Endothelial cell of umbilical vein (primary cell): ENCODE measurements at regions of chr1 and their contacts with region 1.

Region 1: GRCh38 chr1:86913896-86914634 is at the start of gene SELENOF:
- DNase-seq: peak; percentile 100
- H3K4me3 ChIP-seq: peak within 1 kb of the TSS; percentile 84 to 100 (median 99)
- H3K27ac ChIP-seq: peak within 1 kb of the TSS; percentile 100
- H3K4me1 ChIP-seq: peaks cover 16% of the 10 kb centered on the region
- H3K27me3 ChIP-seq: no peaks in the 10 kb centered on the region
- CTCF ChIP-seq: no peak
- POLR2A ChIP-seq: peak; percentile 86
- total RNA-seq, gene SELENOF: 202 and 205 TPM in 2 replicates

Region 2: GRCh38 chr1:85756864-85757263 is 1157.2 kb before region 1 on chr1:
- CTCF ChIA-PET with region 1: no interaction called
- POLR2A ChIA-PET with region 1: no interaction called
- dilution Hi-C with region 1: no loop called
- intact Hi-C with region 1: no loop called
- DNase-seq: no peak
- H3K4me3 ChIP-seq: no peak overlapping the region
- H3K27ac ChIP-seq: no peak overlapping the region
- H3K4me1 ChIP-seq: no peaks in the 10 kb centered on the region
- H3K27me3 ChIP-seq: peaks cover 0 to 3% of the 10 kb centered on the region in 2 experiments
- CTCF ChIP-seq: no peak
- POLR2A ChIP-seq: no peak

Region 3: GRCh38 chr1:86704458-86704971 is 209.6 kb before region 1 on chr1 and contains the start of gene SH3GLB1:
- CTCF ChIA-PET with region 1: interaction called, 3 read pairs
- POLR2A ChIA-PET with region 1: interaction called, 3 read pairs
- dilution Hi-C with region 1: no loop called
- intact Hi-C with region 1: loop called (anchors 10 kb)
- DNase-seq: peak; percentile 91
- H3K4me3 ChIP-seq: peak within 1 kb of the TSS; percentile 88 to 96 (median 94)
- H3K27ac ChIP-seq: peak within 1 kb of the TSS; percentile 85
- H3K4me1 ChIP-seq: peaks cover 28% of the 10 kb centered on the region
- H3K27me3 ChIP-seq: no peaks in the 10 kb centered on the region
- CTCF ChIP-seq: peak; percentile 96
- POLR2A ChIP-seq: peak; percentile 78
- total RNA-seq, gene SH3GLB1: 140 and 148 TPM in 2 replicates

Region 4: GRCh38 chr1:86833461-86834215 is 80.4 kb before region 1 on chr1:
- CTCF ChIA-PET with region 1: interaction called, 9 read pairs
- POLR2A ChIA-PET with region 1: no interaction called
- dilution Hi-C with region 1: no loop called
- intact Hi-C with region 1: loop called (anchors 1 kb)
- DNase-seq: peak; percentile 75
- H3K4me3 ChIP-seq: no peak overlapping the region
- H3K27ac ChIP-seq: no peak overlapping the region
- H3K4me1 ChIP-seq: no peaks in the 10 kb centered on the region
- H3K27me3 ChIP-seq: no peaks in the 10 kb centered on the region
- CTCF ChIP-seq: peak; percentile 51 to 52
- POLR2A ChIP-seq: no peak

Region 5: GRCh38 chr1:86965012-86965826 is 51.2 kb after region 1 on chr1:
- CTCF ChIA-PET with region 1: interaction called, 34 read pairs
- POLR2A ChIA-PET with region 1: interaction called, 3 read pairs
- dilution Hi-C with region 1: no loop called
- intact Hi-C with region 1: loop called (anchors 1 kb)
- DNase-seq: peak; percentile 56
- H3K4me3 ChIP-seq: no peak overlapping the region
- H3K27ac ChIP-seq: no peak overlapping the region
- H3K4me1 ChIP-seq: no peaks in the 10 kb centered on the region
- H3K27me3 ChIP-seq: no peaks in the 10 kb centered on the region
- CTCF ChIP-seq: peak; percentile 61 to 63
- POLR2A ChIP-seq: no peak

Region 6: DNA sequence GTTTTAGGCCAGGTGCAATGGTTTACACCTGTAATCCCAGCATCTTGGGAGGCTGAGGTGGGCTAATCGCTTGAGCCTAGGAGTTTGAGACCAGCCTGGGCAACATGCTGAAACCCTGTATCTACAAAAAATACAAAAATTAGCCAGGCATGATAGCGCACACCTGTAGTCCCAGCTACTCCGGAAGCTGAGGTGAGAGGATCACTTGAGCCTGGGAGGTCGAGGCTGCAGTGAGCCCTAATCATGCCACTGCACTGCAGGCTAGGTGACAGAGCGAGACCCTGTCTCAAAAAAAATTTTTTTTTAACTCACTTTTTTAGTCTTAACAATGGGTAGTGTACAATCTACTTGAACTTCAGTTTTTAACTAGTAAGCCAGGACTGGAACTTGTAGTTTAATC is 137.9 kb after region 1 on chr1:
- CTCF ChIA-PET with region 1: no interaction called
- POLR2A ChIA-PET with region 1: no interaction called
- dilution Hi-C with region 1: no loop called
- intact Hi-C with region 1: no loop called
- DNase-seq: no peak
- H3K4me3 ChIP-seq: no peak overlapping the region
- H3K27ac ChIP-seq: no peak overlapping the region
- H3K4me1 ChIP-seq: no peaks in the 10 kb centered on the region
- H3K27me3 ChIP-seq: no peaks in the 10 kb centered on the region
- CTCF ChIP-seq: no peak
- POLR2A ChIP-seq: no peak

Region 7: DNA sequence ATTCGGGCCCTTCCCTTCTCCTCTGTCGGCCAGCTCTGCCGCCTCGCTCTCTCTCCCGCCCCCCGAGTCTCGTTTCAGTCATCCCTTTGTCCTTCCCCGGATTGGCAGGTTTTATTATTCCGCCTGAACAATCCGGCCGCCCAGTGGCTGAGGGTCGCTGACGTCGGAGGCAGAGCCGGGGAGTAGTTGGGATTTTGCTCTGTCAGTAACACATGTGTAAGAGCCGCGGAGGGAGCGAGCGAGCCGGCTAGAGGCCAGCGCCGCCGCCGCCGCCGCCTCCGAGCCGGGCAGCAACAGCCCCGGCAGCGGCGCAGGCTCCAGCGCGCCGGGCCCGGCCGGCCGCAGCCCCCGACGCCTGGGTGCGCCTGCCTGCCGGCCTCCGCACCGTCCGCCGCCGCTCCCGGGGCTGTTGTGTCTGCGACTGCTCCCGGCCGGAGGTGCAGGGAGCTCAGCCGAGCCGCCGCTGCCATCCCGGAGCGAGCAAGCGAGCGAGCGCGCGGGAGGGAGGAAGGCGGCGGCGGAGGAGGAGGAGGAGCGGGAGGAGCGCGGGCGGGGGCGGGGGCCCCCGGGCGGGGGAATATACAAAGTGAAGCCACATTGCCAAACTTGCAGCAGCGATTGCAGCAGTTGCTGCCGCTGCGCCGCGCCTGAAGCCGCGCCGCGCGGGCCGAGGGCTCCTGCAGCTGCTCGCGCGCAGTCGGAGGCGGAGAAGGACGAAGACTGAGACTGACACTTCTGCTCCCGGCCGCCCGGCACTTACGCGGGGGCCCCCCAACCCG is 414.4 kb after region 1 on chr1 and contains the start of gene LMO4:
- CTCF ChIA-PET with region 1: no interaction called
- POLR2A ChIA-PET with region 1: interaction called, 3 read pairs
- dilution Hi-C with region 1: no loop called
- intact Hi-C with region 1: loop called (anchors 2 kb)
- DNase-seq: peak; percentile 97
- H3K4me3 ChIP-seq: peak within 1 kb of the TSS; percentile 86 to 95 (median 89)
- H3K27ac ChIP-seq: peak within 1 kb of the TSS; percentile 58
- H3K4me1 ChIP-seq: peaks cover 12% of the 10 kb centered on the region
- H3K27me3 ChIP-seq: peaks cover 0 to 3% of the 10 kb centered on the region in 2 experiments
- CTCF ChIP-seq: no peak
- POLR2A ChIP-seq: peak; percentile 50
- total RNA-seq, gene LMO4: 22.5 and 24.8 TPM in 2 replicates